T-cell (primary cell): ENCODE measurements at regions of chr2 and their contacts with region 1.

Region 1: DNA sequence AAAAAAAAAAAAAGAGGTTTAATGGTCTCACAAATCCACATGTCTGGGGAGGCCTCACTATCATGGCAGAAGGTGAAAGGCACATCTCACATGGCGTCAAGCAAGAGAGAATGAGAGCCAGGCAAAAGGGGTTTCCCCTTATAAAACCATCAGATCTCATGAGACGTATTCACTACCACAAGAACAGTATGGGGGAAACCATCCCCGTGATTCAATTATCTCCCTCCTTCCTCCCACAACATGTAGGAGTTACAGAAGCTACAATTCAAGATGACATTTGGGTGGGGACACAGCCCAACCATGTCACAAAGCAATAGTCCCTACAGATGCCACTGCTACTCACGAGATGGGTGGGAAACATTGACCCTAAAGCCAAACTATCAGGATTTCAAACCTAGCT is 392.7 kb upstream of the ID2 start:
- DNase-seq: no peak
- ATAC-seq: no peak
- H3K4me3 ChIP-seq: no peak overlapping the region
- H3K4me3 Mint-ChIP-seq: no peak overlapping the region
- H3K27ac ChIP-seq: no peak overlapping the region
- H3K27ac Mint-ChIP-seq: no peak overlapping the region
- H3K4me1 ChIP-seq: no peaks in the 10 kb centered on the region
- H3K4me1 Mint-ChIP-seq: peaks cover 0 to 1% (median 0%) of the 10 kb centered on the region in 3 donors
- H3K27me3 ChIP-seq: no peaks in the 10 kb centered on the region
- H3K27me3 Mint-ChIP-seq: peaks cover 0 to 1% of the 10 kb centered on the region in 2 donors

Region 2: DNA sequence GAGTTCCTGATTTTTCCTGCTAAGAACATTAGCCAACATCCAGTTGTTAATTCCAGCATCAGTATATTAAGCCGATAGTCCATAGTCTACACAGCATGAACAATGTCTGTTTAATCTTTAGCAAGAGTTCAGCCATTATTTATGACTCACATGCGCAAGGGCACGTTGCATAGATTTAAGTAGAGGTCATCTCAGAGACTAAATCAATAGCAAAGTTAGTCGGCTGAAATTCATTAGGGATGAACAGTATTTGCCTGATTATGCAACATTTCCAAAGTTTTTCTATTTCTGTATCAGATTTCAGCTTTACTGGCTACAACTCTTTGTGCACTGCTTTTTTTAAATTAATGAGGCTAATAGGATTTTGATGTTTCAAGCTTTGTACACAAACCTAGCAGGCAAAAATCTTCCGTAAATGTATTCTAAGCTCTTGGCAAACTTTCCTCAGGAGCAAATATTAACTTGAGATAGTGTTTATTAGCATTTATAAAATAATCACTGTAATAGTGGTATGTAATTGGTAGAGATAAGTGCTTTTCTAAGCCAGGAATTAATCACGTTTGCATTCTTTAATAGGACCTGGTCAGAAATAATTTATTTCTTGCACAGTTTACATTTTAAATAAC is 185.9 kb before region 1 on chr2:
- CTCF ChIA-PET with region 1: no interaction called
- POLR2A ChIA-PET with region 1: no interaction called
- DNase-seq: no peak
- ATAC-seq: no peak
- H3K4me3 ChIP-seq: no peak overlapping the region
- H3K4me3 Mint-ChIP-seq: no peak overlapping the region
- H3K27ac ChIP-seq: no peak overlapping the region
- H3K27ac Mint-ChIP-seq: no peak overlapping the region
- H3K4me1 ChIP-seq: peaks cover 0 to 5% of the 10 kb centered on the region in 2 experiments
- H3K4me1 Mint-ChIP-seq: peaks cover 0 to 7% (median 7%) of the 10 kb centered on the region in 3 donors
- H3K27me3 ChIP-seq: no peaks in the 10 kb centered on the region
- H3K27me3 Mint-ChIP-seq: no peaks in the 10 kb centered on the region

Region 3: DNA sequence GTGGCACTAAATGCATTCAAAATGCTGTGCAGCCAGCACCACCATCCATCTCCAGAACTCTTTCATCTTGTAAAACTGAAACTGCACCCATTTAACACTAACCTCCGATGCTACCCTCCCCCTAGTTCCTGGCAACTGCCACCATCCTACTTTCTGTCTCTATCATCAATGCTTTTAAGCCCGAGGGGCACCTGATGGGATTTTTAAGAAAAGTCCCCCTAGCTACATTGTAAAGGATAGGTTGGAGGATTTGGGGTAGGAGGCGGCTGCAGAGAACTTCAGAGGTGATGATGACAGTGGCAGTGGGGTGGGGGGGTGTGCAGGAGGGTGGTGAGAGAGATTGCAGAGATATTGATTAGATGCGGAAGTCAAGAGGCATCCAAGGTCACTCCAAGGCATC is 1352.5 kb after region 1 on chr2:
- CTCF ChIA-PET with region 1: no interaction called
- POLR2A ChIA-PET with region 1: interaction called in 1 of 2 experiments, 13 read pairs
- DNase-seq: peak in 3 of 35 experiments; percentile 2 to 34 (median 16)
- ATAC-seq: peak in 2 of 4 experiments; percentile 43 to 57
- H3K4me3 ChIP-seq: peak overlapping the region in 1 of 2 donors; percentile 28
- H3K4me3 Mint-ChIP-seq: peak overlapping the region; percentile 2 to 60 (median 57)
- H3K27ac ChIP-seq: no peak overlapping the region
- H3K27ac Mint-ChIP-seq: peak overlapping the region in 1 of 2 donors; percentile 51
- H3K4me1 ChIP-seq: peaks cover 0 to 9% of the 10 kb centered on the region in 2 experiments
- H3K4me1 Mint-ChIP-seq: peaks cover 0 to 11% (median 8%) of the 10 kb centered on the region in 3 donors
- H3K27me3 ChIP-seq: peaks cover 0 to 11% of the 10 kb centered on the region in 2 experiments
- H3K27me3 Mint-ChIP-seq: peaks cover 0 to 4% of the 10 kb centered on the region in 2 donors